GM12878 (cell line): ENCODE measurements at regions of chr3 and their contacts with region 1.

Region 1: DNA sequence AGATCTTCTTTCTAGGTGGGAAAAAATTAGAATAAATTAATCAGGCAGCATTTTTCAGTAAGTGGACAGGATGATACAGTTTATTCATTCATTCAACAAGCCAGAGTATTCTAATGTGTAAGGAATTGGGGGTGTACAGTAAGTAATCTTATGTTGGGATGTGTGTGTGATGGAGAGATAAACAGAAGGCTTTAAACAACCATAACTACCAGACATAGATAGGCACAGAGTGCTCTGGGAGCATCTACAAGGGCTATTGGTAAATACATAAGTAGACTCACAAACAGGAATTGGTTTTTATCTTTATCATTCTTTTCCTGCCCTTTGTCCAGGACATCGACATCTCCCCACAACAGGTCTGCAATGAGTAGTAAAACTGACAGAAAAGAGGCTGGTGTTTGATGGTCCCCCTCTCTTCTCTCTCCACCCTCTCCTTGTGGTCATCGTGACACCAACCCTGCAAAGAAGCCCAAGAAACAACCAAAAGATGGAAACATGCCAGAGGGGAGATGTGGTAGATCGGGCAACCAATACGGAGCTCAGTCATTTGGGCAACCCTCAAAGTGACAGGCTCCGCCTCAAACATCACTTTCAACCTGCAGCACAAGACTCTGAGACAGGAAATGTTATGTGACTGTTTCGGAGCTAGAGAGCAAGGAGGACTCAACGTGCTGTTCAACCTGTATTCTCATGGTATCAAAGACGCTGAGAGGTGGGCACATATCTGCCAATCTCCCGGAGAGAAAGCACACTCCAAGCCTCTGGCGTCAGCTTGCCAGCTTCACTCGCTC is 28.7 kb upstream of the B3GNT5 start:
- DNase-seq: no peak
- ATAC-seq: peak; percentile 30; the same call in 2 of the 3 replicates
- H3K4me3 ChIP-seq: no peak overlapping the region
- H3K27ac ChIP-seq: no peak overlapping the region
- H3K4me1 ChIP-seq: no peaks in the 10 kb centered on the region
- H3K27me3 ChIP-seq: 0 out of 4 replicates have a peak, but pooled peaks cover 0 to 3% of the 10 kb centered on the region in 2 experiments
- CTCF ChIP-seq: no peak
- EP300 ChIP-seq: no peak
- POLR2A ChIP-seq: no peak
- RAD21 ChIP-seq: no peak

Region 2: GRCh38 chr3:183149901-183150750 is 74.2 kb before region 1 on chr3:
- CTCF ChIA-PET with region 1: no interaction called
- POLR2A ChIA-PET with region 1: interaction called, 11 read pairs
- RAD21 ChIA-PET with region 1: no interaction called
- SMC1A ChIA-PET with region 1: no interaction called
- in situ Hi-C with region 1: no loop called
- intact Hi-C with region 1: no loop called
- DNase-seq: no peak
- ATAC-seq: no peak
- H3K4me3 ChIP-seq: no peak overlapping the region
- H3K27ac ChIP-seq: no peak overlapping the region
- H3K4me1 ChIP-seq: peaks cover under 1% of the 10 kb centered on the region; the same call in 1 of the 2 replicates
- H3K27me3 ChIP-seq: no peaks in the 10 kb centered on the region
- CTCF ChIP-seq: no peak
- EP300 ChIP-seq: no peak
- POLR2A ChIP-seq: 0 out of 2 replicates have a peak, but pooled peaks have one; percentile 31
- RAD21 ChIP-seq: no peak

Region 3: DNA sequence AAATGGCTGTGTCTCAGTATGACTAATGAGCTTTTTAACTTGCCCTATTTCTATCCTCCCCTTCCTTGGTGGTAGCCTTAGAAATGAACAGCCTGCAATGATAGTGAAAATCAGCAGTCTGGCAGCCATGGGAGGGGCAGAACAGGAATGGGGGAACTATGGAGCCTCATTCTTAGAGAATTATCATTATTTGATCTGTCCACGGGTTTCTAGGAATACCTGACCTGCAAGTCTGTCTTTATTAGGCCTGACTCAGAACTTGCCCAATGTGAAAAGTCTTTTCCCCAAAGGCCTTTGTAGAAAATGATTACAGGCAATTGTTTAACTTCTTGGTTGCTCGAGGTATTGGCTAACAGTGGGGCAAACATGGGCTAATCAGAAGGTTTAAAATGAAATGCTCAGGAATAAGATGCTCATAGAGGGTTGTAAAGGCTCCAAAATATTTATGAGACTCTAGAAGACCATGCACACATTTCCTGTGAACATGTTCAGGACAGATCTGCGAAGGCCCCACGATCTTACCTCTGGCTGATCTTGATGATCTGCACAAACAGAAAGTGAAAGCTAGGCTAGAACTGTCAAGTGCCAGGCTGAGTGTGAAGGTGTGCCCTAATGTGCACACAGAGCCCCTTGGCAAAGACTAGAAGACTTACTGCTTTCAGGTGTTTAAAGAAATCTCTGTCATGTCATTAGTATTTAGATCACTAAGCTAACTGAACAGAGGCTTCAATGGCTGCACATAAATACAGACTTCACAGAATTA is 22.2 kb before region 1 on chr3:
- CTCF ChIA-PET with region 1: no interaction called
- POLR2A ChIA-PET with region 1: no interaction called
- RAD21 ChIA-PET with region 1: no interaction called
- SMC1A ChIA-PET with region 1: no interaction called
- in situ Hi-C with region 1: no loop called
- intact Hi-C with region 1: no loop called
- DNase-seq: no peak
- ATAC-seq: peak; percentile 71
- H3K4me3 ChIP-seq: no peak overlapping the region
- H3K27ac ChIP-seq: no peak overlapping the region
- H3K4me1 ChIP-seq: no peaks in the 10 kb centered on the region
- H3K27me3 ChIP-seq: no peaks in the 10 kb centered on the region
- CTCF ChIP-seq: no peak
- EP300 ChIP-seq: no peak
- POLR2A ChIP-seq: no peak
- RAD21 ChIP-seq: no peak

Region 4: GRCh38 chr3:183653209-183654064 is 429.1 kb after region 1 on chr3:
- CTCF ChIA-PET with region 1: no interaction called
- POLR2A ChIA-PET with region 1: no interaction called
- RAD21 ChIA-PET with region 1: no interaction called
- SMC1A ChIA-PET with region 1: no interaction called
- in situ Hi-C with region 1: no loop called
- intact Hi-C with region 1: no loop called
- DNase-seq: no peak
- ATAC-seq: no peak
- H3K4me3 ChIP-seq: no peak overlapping the region
- H3K27ac ChIP-seq: no peak overlapping the region
- H3K4me1 ChIP-seq: no peaks in the 10 kb centered on the region
- H3K27me3 ChIP-seq: no peaks in the 10 kb centered on the region
- CTCF ChIP-seq: no peak
- EP300 ChIP-seq: no peak
- POLR2A ChIP-seq: no peak
- RAD21 ChIP-seq: no peak